ENCODE measurements at regions of chr3 and their contacts with region 1.

Region 1: DNA sequence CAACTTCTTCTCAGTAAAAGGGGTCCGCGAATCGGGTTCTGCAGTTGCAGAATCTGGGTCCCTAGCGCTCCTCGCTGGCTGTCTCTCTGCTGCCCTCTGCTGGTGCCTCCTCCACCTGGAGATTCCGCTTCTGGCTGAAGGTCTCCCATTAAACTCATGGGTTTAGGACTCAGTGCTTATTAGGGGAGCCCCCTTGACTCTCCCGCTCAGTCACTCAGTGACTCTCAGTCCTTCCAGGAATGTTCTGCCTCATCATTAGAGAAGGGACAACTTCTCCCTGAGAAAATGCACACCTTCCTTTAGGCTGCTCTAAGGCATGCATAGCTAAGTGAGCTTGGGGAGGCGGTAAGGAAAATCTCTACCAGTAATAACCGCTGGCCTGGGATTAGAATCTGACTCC is 7.1 kb downstream of the CPN2 start:
- DNase-seq: peak; percentile 82
- H3K4me3 Mint-ChIP-seq: no peak overlapping the region
- H3K27ac Mint-ChIP-seq: no peak overlapping the region
- H3K4me1 Mint-ChIP-seq: no peaks in the 10 kb centered on the region
- H3K27me3 Mint-ChIP-seq: peaks cover 55% of the 10 kb centered on the region

Region 2: DNA sequence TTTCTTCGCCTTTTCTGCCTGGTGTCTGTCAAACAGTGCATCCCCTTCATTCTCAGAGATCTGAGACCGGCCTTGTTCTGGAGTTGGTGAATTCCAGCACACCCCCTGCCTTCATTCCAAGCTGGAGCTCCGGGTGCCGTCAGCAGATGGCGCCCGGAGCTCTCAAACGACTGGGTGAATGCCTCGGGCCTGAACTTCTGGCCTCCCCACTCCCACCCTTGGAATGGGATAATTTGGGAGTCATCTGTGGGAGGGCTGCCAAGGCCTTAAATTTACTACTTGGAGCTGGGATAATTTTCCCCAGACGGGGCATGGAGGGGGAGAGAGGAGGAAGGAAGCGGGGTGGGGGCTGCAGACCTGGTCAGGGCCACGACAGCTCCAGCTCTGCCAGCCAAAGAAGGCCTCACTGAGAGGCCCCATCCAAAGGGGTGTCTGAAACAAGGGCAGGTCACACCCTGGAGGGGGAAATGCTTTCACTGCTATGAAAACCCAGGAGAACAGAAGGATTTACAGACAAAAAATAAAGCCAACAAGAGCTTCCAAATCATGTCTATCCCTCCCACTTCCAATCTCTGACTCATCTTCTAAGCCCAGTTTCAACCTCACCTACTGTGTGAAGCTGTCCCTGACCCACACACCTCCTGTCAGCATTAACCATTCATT is 563.1 kb before region 1 on chr3:
- CTCF ChIA-PET with region 1: interaction called, 35 read pairs
- DNase-seq: peak; percentile 41
- H3K4me3 Mint-ChIP-seq: no peak overlapping the region
- H3K27ac Mint-ChIP-seq: no peak overlapping the region
- H3K4me1 Mint-ChIP-seq: peaks cover 34% of the 10 kb centered on the region
- H3K27me3 Mint-ChIP-seq: peaks cover 65% of the 10 kb centered on the region

Region 3: DNA sequence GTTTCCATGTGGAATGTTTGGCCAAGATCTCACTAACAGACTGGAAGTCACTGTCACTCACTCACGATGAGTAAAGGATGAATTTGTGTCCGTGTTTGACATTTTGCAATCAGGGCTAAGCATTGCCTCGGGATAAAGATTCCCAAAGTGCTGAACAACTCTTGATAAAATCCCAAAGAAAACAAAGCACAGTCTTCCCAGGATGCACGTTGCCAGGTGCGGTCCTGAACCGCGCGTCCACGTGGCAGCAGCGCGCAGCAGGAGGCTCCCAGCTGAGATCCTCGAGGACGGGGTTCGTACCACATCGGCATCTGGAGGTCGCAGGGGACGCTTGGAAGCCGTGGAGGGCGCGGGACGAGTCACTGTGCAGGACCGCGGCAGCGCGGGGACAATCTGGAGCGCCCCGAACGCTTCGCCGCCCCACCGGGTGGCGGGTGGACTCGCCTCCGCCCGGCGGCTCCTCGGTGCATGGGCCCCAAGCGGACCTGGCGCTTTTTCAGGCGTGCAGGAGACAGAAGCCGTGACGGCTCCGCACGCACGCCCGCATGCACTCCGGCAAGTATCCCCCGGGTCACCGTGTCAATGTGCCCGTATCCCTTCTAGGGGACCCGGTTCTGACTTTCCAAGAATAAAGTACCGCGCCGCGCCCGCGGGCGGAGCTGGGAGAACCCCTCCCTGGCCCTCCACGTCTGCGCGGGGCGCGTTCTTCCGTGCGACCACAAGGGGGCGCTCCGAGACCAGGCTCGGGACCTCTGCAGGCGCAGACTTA is 10.6 kb before region 1 on chr3:
- CTCF ChIA-PET with region 1: interaction called, 33 read pairs
- DNase-seq: peak; percentile 91
- H3K4me3 Mint-ChIP-seq: peak overlapping the region; percentile 71
- H3K27ac Mint-ChIP-seq: no peak overlapping the region
- H3K4me1 Mint-ChIP-seq: peaks cover 13% of the 10 kb centered on the region
- H3K27me3 Mint-ChIP-seq: peaks cover 82% of the 10 kb centered on the region

Region 4: GRCh38 chr3:194357681-194358080 is 13.7 kb after region 1 on chr3:
- CTCF ChIA-PET with region 1: interaction called, 32 read pairs
- DNase-seq: no peak
- H3K4me3 Mint-ChIP-seq: no peak overlapping the region
- H3K27ac Mint-ChIP-seq: no peak overlapping the region
- H3K4me1 Mint-ChIP-seq: peaks cover 3% of the 10 kb centered on the region
- H3K27me3 Mint-ChIP-seq: peaks cover 45% of the 10 kb centered on the region

Region 5: GRCh38 chr3:194395778-194396547 is 52.0 kb after region 1 on chr3:
- CTCF ChIA-PET with region 1: interaction called, 167 read pairs
- DNase-seq: peak; percentile 85
- H3K4me3 Mint-ChIP-seq: peak overlapping the region; percentile 68
- H3K27ac Mint-ChIP-seq: peak overlapping the region; percentile 76
- H3K4me1 Mint-ChIP-seq: peaks cover 58% of the 10 kb centered on the region
- H3K27me3 Mint-ChIP-seq: peaks cover 24% of the 10 kb centered on the region

Region 6: DNA sequence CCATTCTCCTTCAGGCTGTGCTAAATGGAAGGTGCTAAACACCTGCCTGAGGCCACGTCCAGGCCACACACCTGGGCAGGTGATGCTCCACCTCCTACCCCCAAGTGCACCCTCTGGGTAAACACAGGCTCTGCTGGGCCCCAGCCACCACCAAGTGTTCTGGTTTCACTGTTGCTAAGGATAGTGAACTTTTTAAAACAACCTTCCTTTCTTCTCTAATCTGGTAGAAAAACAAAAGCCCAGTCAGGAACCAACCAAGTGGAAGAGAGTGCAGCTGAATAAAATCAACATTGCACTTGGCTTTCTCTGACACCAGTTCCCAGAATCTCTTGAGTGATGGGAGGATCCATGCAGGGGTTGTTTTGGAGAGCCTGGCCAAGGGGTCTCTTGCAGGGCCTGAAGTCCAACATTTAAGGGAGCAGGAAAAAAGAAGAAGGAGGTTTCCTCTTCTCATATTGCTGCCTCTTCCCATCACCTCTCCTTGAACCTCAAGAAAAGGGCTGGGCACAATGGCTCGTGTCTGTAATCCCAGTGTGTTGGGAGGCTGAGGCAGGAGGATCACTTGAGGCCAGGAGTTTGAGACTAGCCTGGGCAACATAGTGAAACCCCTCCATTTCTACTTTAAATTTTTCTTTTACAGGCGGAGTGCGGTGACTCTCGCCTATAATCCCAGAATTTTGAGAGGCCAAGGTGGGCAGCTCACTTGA is 169.0 kb after region 1 on chr3:
- CTCF ChIA-PET with region 1: no interaction called
- DNase-seq: no peak
- H3K4me3 Mint-ChIP-seq: no peak overlapping the region
- H3K27ac Mint-ChIP-seq: no peak overlapping the region
- H3K4me1 Mint-ChIP-seq: no peaks in the 10 kb centered on the region
- H3K27me3 Mint-ChIP-seq: peaks cover 14% of the 10 kb centered on the region

Measured in activated naive CD4-positive, alpha-beta T cell treated with anti-CD3 and anti-CD28 coated beads, Interleukin-2, amount 10 ng/mL, durations not matched to agents 7 days and 5 days (primary cell).